Dorsolateral prefrontal cortex (tissue), 120 donors: ENCODE measurements at regions of chr17 and their contacts with region 1.

Region 1: DNA sequence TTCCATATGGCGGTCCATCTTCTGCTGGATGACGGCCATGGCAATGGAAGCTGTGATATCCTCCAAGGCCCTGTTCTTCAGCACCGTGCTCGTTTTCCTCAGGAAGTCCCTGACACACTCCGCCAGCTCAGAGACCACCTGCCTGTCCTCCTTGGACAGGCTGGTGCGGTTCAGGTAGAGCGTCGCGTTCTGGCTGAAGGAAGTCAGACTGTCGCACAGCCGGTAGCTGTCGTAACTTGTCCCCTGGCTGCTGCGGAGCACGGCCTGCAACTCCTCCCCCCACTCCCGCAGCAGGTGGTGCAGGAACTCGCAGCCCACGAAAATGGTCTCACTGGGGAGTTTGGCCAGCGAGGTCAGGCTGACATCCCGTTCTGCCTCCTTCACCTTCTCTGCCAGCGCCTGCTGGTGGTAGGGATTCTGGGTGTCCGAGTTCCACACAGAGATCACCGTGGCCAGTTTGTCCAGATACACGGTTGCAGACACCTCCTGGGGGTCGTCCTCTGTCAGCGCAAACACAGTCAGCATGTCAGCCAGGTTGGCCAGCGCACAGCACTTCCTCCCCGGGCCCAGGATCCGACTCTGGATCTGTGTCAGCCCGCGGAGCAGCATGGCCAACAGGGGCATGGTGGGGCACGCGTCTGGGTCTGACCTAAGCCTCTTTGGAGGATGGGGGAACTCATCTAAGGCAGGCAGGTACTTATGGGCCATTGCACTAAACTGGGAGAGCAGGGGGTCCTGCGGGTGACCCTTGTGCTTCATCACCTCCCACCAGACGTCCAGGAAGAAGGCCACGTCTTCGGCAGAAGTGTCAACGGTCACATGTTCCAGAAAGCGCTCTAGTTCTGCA is 5.1 kb downstream of the GEMIN4 start:
- DNase-seq: peak in 1 of 10 donors; percentile 41
- H3K4me3 ChIP-seq: no peak overlapping the region
- H3K27ac ChIP-seq: peak overlapping the region in 1 of 59 donors; percentile 43
- H3K27me3 ChIP-seq: no peaks in the 10 kb centered on the region
- CTCF ChIP-seq: no peak

Region 2: DNA sequence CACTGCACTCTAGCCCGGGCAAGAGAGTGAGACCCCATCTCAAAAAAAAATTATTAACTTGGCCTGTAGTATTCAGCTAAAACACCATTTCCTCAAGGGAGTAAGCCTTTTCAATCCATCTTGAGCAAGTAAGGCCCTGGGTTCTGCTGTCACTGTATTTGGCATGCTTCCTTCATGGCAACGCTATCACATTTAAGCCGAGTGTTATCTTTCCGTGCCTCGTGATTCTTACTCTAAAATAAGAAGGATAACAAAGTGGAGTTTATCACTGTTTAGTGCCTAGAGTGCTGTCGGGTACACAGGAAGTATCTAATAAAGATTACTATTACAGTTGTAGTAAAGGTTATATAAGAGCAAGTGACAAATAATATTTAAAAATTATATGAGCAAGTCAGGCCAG is 41.1 kb before region 1 on chr17:
- intact Hi-C with region 1: loop called in 1 of 2 experiments (anchors 5 kb)
- DNase-seq: no peak
- H3K4me3 ChIP-seq: no peak overlapping the region
- H3K27ac ChIP-seq: no peak overlapping the region
- H3K27me3 ChIP-seq: no peaks in the 10 kb centered on the region
- CTCF ChIP-seq: no peak

Region 3: DNA sequence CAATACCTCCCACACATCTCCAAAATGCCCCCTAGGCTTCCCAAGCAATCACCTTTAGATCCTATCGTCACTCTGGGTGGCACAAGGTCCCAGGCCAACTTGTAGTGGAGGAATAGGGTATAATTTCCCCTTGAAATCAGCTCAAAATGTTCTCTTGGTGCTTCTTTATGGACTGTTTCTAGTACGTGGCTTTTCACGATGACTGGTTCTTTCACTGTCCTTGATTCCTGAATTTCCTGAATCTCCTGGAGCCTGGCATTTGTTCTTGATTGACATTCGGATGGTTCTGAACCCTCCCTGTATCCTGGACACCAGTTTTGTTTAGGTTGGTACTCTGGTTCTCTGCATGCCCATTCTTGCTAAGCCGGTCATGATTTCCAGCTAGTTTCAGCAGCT is 25.5 kb before region 1 on chr17:
- intact Hi-C with region 1: loop called in 1 of 2 experiments (anchors 2 kb)
- DNase-seq: no peak
- H3K4me3 ChIP-seq: no peak overlapping the region
- H3K27ac ChIP-seq: peak overlapping the region in 2 of 59 donors; percentile 23 to 40
- H3K27me3 ChIP-seq: no peaks in the 10 kb centered on the region
- CTCF ChIP-seq: no peak